Transverse colon (tissue), 4 donors: ENCODE measurements at regions of chr7 and their contacts with region 1.

Region 1: GRCh38 chr7:138338361-138338760 is 121.7 kb upstream of the TRIM24 start:
- DNase-seq: no peak
- H3K4me3 ChIP-seq: no peak overlapping the region
- H3K27ac ChIP-seq: no peak overlapping the region
- H3K4me1 ChIP-seq: no peaks in the 10 kb centered on the region
- H3K27me3 ChIP-seq: no peaks in the 10 kb centered on the region
- CTCF ChIP-seq: no peak
- EP300 ChIP-seq: no peak
- POLR2A ChIP-seq: no peak

Region 2: GRCh38 chr7:138449580-138449979 is 111.2 kb after region 1 on chr7:
- in situ Hi-C with region 1: loop called in 1 of 4 experiments (anchors 25 kb)
- intact Hi-C with region 1: no loop called
- DNase-seq: no peak
- H3K4me3 ChIP-seq: no peak overlapping the region
- H3K27ac ChIP-seq: no peak overlapping the region
- H3K4me1 ChIP-seq: no peaks in the 10 kb centered on the region
- H3K27me3 ChIP-seq: no peaks in the 10 kb centered on the region
- CTCF ChIP-seq: peak in 1 of 5 experiments; percentile 17
- EP300 ChIP-seq: no peak
- POLR2A ChIP-seq: no peak